B cell (primary cell): ENCODE measurements at regions of chr9 and their contacts with region 1.

Region 1: GRCh38 chr9:114538241-114538640 is 33.0 kb upstream of the WHRN start:
- DNase-seq: peak; percentile 74
- ATAC-seq: peak; percentile 99
- H3K4me3 ChIP-seq: no peak overlapping the region
- H3K4me3 Mint-ChIP-seq: no peak overlapping the region
- H3K27ac ChIP-seq: peak overlapping the region in 1 of 2 donors; percentile 0
- H3K27ac Mint-ChIP-seq: peak overlapping the region; percentile 38
- H3K4me1 ChIP-seq: peaks cover 8 to 13% of the 10 kb centered on the region in 2 donors
- H3K4me1 Mint-ChIP-seq: peaks cover 27% of the 10 kb centered on the region
- H3K27me3 ChIP-seq: no peaks in the 10 kb centered on the region
- H3K27me3 Mint-ChIP-seq: no peaks in the 10 kb centered on the region
- CTCF ChIP-seq: peak; percentile 68

Region 2: GRCh38 chr9:114551883-114552685 is 13.8 kb after region 1 on chr9:
- CTCF ChIA-PET with region 1: interaction called, 17 read pairs
- POLR2A ChIA-PET with region 1: interaction called, 3 read pairs
- intact Hi-C with region 1: no loop called
- DNase-seq: no peak
- ATAC-seq: no peak
- H3K4me3 ChIP-seq: no peak overlapping the region
- H3K4me3 Mint-ChIP-seq: no peak overlapping the region
- H3K27ac ChIP-seq: no peak overlapping the region
- H3K27ac Mint-ChIP-seq: no peak overlapping the region
- H3K4me1 ChIP-seq: peaks cover 5 to 10% of the 10 kb centered on the region in 2 donors
- H3K4me1 Mint-ChIP-seq: peaks cover 20% of the 10 kb centered on the region
- H3K27me3 ChIP-seq: no peaks in the 10 kb centered on the region
- H3K27me3 Mint-ChIP-seq: no peaks in the 10 kb centered on the region
- CTCF ChIP-seq: no peak

Region 3: DNA sequence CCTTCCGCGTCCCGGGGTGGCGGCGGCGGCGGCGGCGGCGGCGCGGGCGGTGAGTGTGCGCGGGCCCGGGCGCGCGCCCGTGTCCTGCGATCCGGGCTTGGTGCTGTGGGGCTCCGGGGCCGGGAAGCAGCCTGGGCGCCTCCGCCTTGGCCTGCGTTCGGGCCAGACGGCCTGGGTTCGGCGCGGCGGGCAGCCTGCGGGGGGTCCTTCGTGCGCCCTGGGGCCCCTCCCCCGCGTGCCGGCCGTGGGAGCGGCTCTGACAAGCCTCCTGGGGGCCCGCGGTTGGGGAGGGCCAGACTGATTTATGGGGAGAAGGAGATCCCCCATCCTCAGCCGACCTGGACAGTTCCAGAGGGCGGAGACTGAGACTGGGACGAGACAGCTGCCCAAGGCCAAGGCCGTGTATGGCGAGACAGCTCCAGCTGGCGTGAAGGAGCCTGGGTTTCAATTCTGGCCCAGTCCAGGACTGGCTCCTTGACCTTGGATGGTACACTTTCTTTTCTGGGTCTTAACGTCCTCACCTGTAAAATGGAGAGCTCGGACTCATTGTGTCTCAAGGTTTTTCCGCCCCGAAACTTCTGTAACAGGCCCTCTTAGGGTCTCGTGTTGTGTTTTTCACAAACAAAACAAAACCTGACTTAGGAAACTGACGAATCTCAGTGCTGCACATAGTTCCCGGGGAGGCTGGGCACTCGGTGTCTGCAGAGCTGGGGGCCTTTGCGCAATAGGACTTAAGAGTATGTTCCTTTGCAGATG is 73.5 kb after region 1 on chr9:
- CTCF ChIA-PET with region 1: interaction called, 5 read pairs
- POLR2A ChIA-PET with region 1: no interaction called
- intact Hi-C with region 1: loop called (anchors 5 kb)
- DNase-seq: no peak
- ATAC-seq: peak; percentile 61
- H3K4me3 ChIP-seq: peak overlapping the region; percentile 86 to 98 (median 88)
- H3K4me3 Mint-ChIP-seq: peak overlapping the region; percentile 95
- H3K27ac ChIP-seq: peak overlapping the region; percentile 82 to 89
- H3K27ac Mint-ChIP-seq: peak overlapping the region; percentile 84
- H3K4me1 ChIP-seq: peaks cover 65 to 73% of the 10 kb centered on the region in 2 donors
- H3K4me1 Mint-ChIP-seq: peaks cover 69% of the 10 kb centered on the region
- H3K27me3 ChIP-seq: no peaks in the 10 kb centered on the region
- H3K27me3 Mint-ChIP-seq: no peaks in the 10 kb centered on the region
- CTCF ChIP-seq: no peak